ENCODE measurements at regions of chr17 and their contacts with region 1.

Region 1: DNA sequence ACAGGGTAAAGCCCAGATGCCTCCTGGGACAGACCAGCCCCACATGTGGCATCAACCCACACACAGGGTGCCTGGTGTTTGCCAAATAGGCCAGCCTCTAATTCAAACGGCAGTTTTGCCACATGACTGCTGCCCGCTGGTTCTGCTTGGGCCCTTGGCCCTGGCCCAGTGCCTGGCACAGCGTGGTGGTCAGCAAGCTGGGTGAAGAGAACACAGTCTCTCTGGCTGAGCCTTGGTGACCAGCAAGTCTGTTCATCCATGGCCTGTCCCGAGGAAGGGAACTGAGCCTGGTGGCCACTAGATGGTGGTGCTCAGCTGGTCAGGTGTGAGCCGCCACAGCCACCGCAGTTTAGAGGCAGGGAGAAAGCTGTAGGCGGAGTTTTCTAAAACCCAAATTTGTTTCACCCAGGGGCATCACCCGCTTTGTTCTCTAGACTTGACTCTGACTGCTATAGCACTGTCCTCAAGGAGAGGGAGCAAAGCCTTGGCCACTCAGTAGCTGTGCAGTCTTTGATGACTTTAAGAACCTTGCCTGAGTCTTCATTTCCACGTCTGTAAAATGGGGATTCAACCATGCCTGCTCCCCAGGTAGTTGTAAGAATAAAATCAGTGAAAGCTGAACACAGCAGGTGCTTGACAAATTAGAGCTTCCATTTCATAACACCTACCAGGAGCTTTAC is 4.7 kb upstream of the GFAP start:
- DNase-seq: peak; percentile 66
- H3K4me3 ChIP-seq: no peak overlapping the region
- H3K27ac ChIP-seq: no peak overlapping the region
- H3K4me1 ChIP-seq: peaks cover 30% of the 10 kb centered on the region
- H3K27me3 ChIP-seq: no peaks in the 10 kb centered on the region
- CTCF ChIP-seq: peak; percentile 82 to 90

Region 2: DNA sequence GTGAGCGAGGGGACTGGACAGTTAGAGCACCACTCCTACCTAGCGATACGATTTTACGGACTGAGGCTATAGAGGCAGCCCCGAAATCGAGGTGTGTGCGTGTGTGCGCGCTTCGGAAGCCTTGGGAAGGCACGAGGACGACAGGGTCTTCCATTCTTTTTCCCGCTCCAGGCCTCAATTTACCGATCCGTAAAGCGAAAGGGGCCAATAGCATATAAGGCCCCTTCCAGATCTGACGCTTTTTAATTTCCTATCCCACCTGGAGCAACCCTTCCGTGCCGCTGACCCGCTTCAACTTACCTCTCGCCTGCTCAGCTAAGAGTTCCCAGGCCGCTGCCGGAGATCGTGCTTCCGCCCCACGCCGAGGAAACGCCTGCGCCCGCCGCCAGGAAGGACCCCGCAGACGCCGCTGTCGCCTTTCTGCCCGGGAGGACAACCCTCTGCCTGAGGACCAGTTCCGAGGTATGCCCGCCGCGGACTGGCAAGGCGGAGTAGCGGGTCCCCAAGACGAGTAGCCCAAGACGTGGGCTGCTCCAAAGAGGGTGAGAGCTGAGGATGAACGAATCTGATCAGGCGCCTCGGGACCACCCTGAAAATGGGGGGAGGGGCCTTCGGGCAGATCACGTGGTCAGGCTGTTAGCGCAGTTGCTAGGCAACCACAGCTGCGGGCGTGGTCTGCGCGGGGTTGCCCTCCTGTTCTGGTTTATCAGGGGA is 20.8 kb before region 1 on chr17 and contains the start of gene EFTUD2:
- CTCF ChIA-PET with region 1: no interaction called
- dilution Hi-C with region 1: no loop called
- in situ Hi-C with region 1: no loop called
- intact Hi-C with region 1: loop called (anchors 2 kb)
- DNase-seq: peak; percentile 86
- H3K4me3 ChIP-seq: peak within 1 kb of the TSS; percentile 69 to 89 (median 88)
- H3K27ac ChIP-seq: peak within 1 kb of the TSS; percentile 97
- H3K4me1 ChIP-seq: peaks cover 29% of the 10 kb centered on the region
- H3K27me3 ChIP-seq: no peaks in the 10 kb centered on the region
- CTCF ChIP-seq: no peak
- total RNA-seq, gene EFTUD2: 85.4 to 106 TPM

Region 3: GRCh38 chr17:45001310-45001709 is 81.3 kb after region 1 on chr17:
- CTCF ChIA-PET with region 1: interaction called, 4 read pairs
- dilution Hi-C with region 1: loop called (anchors 5 kb)
- in situ Hi-C with region 1: no loop called
- intact Hi-C with region 1: loop called (anchors 2 kb)
- DNase-seq: no peak
- H3K4me3 ChIP-seq: no peak overlapping the region
- H3K27ac ChIP-seq: no peak overlapping the region
- H3K4me1 ChIP-seq: no peaks in the 10 kb centered on the region
- H3K27me3 ChIP-seq: no peaks in the 10 kb centered on the region
- CTCF ChIP-seq: no peak

Region 4: DNA sequence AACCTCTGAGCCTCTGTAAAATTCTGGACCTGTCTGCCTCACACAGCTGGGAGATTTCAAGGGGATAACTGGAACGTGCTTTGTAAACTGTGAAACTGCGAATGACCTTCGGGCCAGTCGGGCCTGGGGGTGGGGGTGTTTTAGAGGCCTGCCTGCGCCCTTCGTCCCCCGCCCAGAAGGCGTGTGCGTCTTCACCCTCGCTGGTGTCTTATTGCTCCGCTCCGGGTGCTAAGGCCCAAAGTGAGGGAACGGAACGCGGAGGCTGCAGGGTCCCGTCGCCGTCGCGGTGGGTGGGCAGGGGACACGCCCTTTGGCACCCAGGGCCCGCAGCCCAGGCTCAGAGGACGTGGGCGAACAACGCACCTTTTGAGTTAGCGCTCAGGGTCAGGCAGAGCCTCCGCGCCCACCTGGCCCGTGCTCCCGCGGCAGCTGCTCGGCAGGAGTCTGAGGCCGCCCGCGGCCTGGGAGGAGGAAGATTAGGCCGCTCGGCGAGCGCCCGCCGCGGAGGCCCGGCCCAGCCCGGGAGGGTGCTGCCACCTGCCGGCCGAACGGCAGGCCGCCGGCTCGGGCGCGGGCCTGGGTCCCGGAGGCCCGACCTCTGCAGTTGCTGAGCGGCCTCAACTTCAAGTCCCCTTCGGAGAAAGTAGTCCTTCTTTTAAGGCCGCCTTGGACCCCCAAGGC is 101.7 kb after region 1 on chr17:
- CTCF ChIA-PET with region 1: interaction called, 8 read pairs
- dilution Hi-C with region 1: no loop called
- in situ Hi-C with region 1: loop called (anchors 10 kb)
- intact Hi-C with region 1: loop called (anchors 1 kb)
- DNase-seq: peak; percentile 39
- H3K4me3 ChIP-seq: peak overlapping the region in 1 of 3 experiments; percentile 24
- H3K27ac ChIP-seq: no peak overlapping the region
- H3K4me1 ChIP-seq: peaks cover 14% of the 10 kb centered on the region
- H3K27me3 ChIP-seq: no peaks in the 10 kb centered on the region
- CTCF ChIP-seq: peak; percentile 57 to 71

Region 5: DNA sequence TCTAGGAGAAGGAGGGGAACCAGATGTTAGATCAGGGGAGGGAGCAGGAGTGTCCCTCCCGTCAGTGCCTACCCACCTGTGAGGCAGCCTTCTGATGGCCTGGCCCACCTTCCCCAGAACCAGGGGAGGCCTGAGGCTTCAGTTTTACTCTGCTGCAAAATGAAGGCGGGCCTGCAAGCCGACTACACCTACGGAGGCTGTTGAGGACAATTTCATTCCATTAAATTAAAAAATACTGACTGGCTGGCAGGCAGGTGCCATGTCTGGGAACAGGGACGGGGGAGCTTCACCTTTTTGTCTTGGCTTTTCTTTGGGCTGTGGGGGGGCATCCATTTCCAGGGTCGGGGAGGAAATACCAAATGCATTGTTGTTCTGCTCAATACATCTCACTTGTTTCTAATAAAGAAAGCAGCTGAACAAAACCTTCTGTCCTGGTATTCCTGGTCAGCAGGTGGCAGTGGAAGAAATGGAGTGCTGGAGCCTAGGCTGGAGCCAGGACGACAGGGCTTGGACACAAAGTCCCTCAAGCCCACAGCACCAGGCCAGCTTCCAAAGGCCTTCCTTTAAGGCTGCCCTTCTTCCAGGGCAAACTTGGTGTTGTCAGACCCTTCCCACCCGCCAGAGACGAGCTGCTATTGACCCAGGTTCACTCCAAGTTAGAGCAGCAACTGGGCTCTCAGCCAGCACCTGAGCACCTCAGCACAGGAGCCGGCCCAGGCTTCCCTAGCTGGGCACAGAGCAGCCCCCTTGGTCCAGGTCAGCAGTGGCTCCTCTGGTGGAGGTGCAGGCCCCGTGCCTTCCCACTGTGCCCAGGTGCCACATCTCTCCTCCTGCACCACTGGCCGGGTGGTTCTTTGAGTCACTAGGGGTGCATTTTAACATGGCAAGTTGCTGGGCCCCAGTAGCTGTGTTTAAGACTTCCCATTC is 188.8 kb after region 1 on chr17:
- CTCF ChIA-PET with region 1: no interaction called
- dilution Hi-C with region 1: no loop called
- in situ Hi-C with region 1: loop called in 1 of 2 experiments (anchors 10 kb)
- intact Hi-C with region 1: no loop called
- DNase-seq: no peak
- H3K4me3 ChIP-seq: no peak overlapping the region
- H3K27ac ChIP-seq: no peak overlapping the region
- H3K4me1 ChIP-seq: peaks cover 2% of the 10 kb centered on the region
- H3K27me3 ChIP-seq: no peaks in the 10 kb centered on the region
- CTCF ChIP-seq: peak in 1 of 2 donors; percentile 28